ENCODE measurements at regions of chr15 and their contacts with region 1.

Region 1: DNA sequence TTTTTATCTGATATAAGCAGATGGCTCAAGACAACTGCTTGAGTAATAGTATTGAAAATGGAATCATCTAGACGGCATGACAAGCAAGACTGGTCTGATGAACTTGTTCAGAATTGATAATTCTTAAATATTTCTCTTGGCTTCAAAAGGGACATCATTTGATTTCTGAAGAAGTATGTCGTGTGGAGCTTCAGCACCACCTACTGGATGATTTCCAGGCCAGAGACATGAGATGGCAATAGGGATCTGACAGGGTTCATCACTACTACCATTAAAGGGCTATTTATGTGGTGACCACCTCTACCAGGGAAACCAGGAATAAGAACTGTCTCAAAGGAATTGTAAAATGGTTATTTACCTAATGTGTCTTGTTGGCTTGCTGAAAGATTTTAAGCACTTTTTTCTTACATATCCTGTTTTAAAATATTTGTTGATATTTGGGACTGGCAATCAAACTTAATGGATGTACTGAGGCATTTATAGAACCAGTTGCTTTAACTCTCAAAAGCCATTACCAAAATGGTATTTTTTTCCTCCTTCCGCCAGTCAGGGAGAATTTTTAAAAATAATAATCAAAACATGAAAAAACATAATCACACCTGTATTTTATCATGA is 99.5 kb upstream of the FAM98B start:
- DNase-seq: peak; percentile 75

Region 2: DNA sequence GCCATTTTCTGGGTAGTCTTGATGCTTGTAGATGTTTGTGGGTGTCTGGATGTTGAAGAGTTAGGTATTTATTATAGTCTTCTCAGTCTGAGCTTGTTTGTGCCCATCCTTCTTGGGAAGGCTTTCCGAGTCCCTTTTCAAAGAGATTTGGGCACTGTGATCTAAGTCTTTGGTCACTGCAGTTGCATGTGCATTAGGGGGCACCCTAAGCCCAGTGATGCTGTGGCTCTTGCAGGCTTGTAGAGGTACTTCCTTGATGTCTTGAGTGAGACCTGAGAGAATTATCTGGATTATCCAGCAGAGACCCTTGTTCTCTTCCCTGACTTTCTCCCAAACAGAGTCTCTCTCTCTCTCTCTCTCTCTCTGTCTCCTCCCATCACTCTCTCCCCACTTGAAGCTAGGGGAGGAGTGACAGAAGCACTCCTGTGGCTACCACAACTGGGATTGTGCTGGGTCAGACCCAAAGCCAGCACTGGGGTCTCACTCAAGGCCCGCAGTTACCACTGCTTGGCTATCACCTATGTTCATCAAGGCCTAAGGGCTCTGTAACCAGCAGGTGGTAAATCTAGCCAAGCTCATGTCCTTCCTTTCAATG is 351.4 kb before region 1 on chr15:
- in situ Hi-C with region 1: loop called (anchors 25 kb)
- DNase-seq: peak; percentile 50

Measured in KBM-7 (cell line).